ENCODE measurements at regions of chr1 and their contacts with region 1.

Region 1: GRCh38 chr1:110619412-110620249 is 13.5 kb upstream of the KCNA2 start:
- DNase-seq: peak; percentile 60
- H3K4me3 ChIP-seq: no peak overlapping the region
- H3K27ac ChIP-seq: no peak overlapping the region
- H3K4me1 ChIP-seq: no peaks in the 10 kb centered on the region
- H3K27me3 ChIP-seq: peaks cover 9 to 15% of the 10 kb centered on the region in 2 experiments
- CTCF ChIP-seq: peak; percentile 92 to 98
- POLR2A ChIP-seq: no peak

Region 2: DNA sequence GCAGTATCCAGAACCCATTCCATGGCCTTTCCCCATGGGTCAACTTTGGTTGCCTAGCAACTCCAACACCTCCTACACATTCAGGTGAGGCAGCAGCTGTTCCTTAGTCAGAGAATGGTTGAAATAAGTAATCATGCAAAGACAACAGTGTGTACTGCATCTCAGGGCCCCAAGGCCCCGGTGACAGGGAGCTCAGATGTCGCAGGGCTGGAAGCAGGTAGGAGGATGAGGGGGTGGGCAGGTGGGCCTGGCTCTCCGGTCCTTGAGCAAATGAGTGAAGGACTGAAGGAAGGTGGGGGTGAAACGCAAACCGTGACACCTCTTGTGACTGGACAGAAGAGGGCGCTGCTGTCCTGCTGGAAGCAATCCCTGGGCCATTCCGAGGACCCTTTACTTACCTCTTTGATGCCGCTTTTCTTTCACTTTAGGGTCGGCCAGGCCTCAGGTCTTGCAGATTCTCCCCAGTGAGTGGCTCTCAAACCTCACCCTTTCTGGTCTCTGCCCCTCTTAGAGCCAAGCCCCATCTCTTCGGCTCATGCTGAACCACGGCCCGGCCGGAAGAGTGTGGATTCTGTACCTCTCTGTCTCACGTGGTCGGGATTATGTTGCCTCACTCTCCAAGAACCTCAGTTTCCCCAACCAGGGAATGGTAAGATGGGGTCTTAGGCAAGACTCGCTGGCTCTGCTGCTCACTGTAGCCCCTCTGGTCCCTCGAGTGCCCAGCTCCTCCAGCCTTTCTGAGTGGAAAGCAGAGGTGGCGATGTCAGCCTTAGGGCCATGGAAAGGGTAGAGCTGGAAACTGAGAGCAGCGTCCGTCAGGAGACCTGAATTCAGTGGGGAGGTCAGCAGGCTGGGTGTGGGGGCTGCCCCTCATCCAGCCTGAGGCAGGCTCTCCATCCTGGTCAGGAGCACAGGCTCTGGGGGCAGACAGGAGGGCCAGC is 95.0 kb before region 1 on chr1:
- CTCF ChIA-PET with region 1: interaction called, 6 read pairs
- POLR2A ChIA-PET with region 1: no interaction called
- dilution Hi-C with region 1: no loop called
- intact Hi-C with region 1: loop called (anchors 1 kb)
- DNase-seq: peak; percentile 41
- H3K4me3 ChIP-seq: no peak overlapping the region
- H3K27ac ChIP-seq: no peak overlapping the region
- H3K4me1 ChIP-seq: no peaks in the 10 kb centered on the region
- H3K27me3 ChIP-seq: peaks cover 3 to 7% of the 10 kb centered on the region in 2 experiments
- CTCF ChIP-seq: peak; percentile 50 to 79
- POLR2A ChIP-seq: no peak

Region 3: GRCh38 chr1:110594456-110595352 is 24.9 kb before region 1 on chr1:
- CTCF ChIA-PET with region 1: interaction called, 12 read pairs
- POLR2A ChIA-PET with region 1: no interaction called
- dilution Hi-C with region 1: no loop called
- intact Hi-C with region 1: no loop called
- DNase-seq: no peak
- H3K4me3 ChIP-seq: no peak overlapping the region
- H3K27ac ChIP-seq: no peak overlapping the region
- H3K4me1 ChIP-seq: no peaks in the 10 kb centered on the region
- H3K27me3 ChIP-seq: peaks cover 0 to 2% of the 10 kb centered on the region in 2 experiments
- CTCF ChIP-seq: no peak
- POLR2A ChIP-seq: no peak

Region 4: DNA sequence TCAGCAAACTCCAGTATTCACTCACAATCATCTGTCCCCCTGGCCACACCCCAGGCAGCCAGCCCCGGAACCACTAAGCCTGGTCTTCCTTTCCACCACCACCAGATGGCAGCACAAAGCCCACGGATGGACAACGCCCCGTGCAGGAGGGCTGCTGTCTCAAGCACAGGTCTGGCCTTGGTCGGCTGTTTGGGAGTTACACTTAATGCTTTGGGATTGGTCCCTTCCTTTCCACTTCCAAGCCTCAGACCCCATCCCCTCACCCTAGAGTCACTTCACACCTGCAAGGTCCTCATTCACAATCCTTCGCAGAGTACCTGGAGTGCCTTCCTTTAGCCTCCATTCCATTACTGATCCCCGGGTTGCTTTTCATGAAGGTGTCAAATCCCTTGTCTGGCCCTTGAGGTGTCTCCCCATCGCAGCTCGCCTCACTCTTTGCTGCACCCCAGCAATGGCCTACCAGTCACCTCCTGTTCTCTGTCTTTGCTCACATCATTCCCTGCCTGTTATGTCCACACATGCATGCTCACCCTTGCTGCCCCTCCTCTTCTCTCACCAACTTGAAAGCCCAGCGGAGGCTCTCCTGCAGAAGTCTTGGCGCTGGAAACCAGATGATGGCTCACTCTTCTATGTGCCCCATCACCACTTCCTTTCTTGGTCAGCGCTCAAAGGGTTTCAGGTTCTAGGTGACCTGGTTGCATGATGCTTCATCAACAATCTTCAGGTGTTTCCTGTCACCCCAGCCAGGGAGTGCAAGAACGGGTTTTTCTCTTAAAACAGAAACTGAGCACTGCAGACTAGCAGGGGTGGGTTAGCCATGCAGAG is 11.4 kb after region 1 on chr1:
- CTCF ChIA-PET with region 1: interaction called, 10 read pairs
- POLR2A ChIA-PET with region 1: no interaction called
- dilution Hi-C with region 1: no loop called
- intact Hi-C with region 1: no loop called
- DNase-seq: peak; percentile 46
- H3K4me3 ChIP-seq: no peak overlapping the region
- H3K27ac ChIP-seq: no peak overlapping the region
- H3K4me1 ChIP-seq: no peaks in the 10 kb centered on the region
- H3K27me3 ChIP-seq: peaks cover 0 to 2% of the 10 kb centered on the region in 2 experiments
- CTCF ChIP-seq: peak; percentile 69 to 85
- POLR2A ChIP-seq: no peak

Region 5: DNA sequence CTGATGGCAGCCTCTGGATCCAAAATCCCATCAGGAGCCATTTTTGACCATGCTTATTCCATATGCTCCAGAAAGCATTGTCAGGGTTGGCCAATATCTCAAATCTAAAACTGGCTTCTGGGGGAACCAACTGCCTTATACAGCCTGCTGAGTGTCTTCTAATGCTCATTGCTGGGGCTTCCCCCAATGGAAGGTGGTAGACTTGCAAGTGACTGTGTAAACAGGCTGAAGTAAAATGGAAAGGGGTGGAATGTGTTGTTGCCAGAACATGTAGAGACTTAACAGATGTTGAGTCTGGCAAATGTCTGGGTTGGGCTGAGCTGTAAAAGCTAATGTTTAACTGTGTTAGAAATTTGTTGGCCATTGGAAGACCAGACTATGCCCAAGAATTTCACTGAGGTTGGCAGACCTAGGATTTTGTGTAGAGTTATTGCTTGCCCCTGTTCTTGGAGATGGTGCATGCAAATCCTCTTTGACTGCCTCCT is 366.8 kb after region 1 on chr1:
- CTCF ChIA-PET with region 1: no interaction called
- POLR2A ChIA-PET with region 1: no interaction called
- dilution Hi-C with region 1: no loop called
- intact Hi-C with region 1: loop called (anchors 10 kb)
- DNase-seq: no peak
- H3K4me3 ChIP-seq: no peak overlapping the region
- H3K27ac ChIP-seq: no peak overlapping the region
- H3K4me1 ChIP-seq: no peaks in the 10 kb centered on the region
- H3K27me3 ChIP-seq: no peaks in the 10 kb centered on the region
- CTCF ChIP-seq: no peak
- POLR2A ChIP-seq: no peak

Measured in endothelial cell of umbilical vein (primary cell).